ENCODE measurements at regions of chr20 and their contacts with region 1.

Region 1: GRCh38 chr20:39429716-39430115 is 467.6 kb downstream of the DHX35 start:
- DNase-seq: no peak
- H3K4me3 ChIP-seq: no peak overlapping the region
- H3K27ac ChIP-seq: no peak overlapping the region
- H3K4me1 ChIP-seq: no peaks in the 10 kb centered on the region
- H3K27me3 ChIP-seq: no peaks in the 10 kb centered on the region

Region 2: GRCh38 chr20:38892091-38892981 is 537.4 kb before region 1 on chr20:
- in situ Hi-C with region 1: no loop called
- DNase-seq: no peak
- H3K4me3 ChIP-seq: no peak overlapping the region
- H3K27ac ChIP-seq: no peak overlapping the region
- H3K4me1 ChIP-seq: no peaks in the 10 kb centered on the region
- H3K27me3 ChIP-seq: peaks cover 18% of the 10 kb centered on the region

Region 3: DNA sequence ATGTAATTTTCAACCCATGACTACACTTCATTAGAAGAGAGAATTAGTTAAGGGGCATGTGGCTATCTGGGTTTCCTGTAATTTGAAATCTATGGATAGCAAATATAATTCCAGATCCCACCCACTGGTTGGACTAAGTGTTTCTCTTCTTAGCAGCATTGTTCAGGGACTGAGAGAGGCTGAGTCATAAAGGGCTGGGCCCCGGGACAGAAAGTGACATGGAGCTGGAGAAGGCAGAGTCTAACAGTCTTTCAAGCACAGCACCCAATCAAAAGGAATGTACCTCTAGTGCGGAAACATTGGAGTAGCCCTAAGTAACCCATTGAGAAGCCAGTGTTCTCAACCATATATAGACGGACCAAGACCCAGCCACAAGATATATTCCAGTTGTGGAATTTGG is 103.7 kb before region 1 on chr20:
- in situ Hi-C with region 1: no loop called
- DNase-seq: no peak
- H3K4me3 ChIP-seq: no peak overlapping the region
- H3K27ac ChIP-seq: no peak overlapping the region
- H3K4me1 ChIP-seq: no peaks in the 10 kb centered on the region
- H3K27me3 ChIP-seq: no peaks in the 10 kb centered on the region

Region 4: DNA sequence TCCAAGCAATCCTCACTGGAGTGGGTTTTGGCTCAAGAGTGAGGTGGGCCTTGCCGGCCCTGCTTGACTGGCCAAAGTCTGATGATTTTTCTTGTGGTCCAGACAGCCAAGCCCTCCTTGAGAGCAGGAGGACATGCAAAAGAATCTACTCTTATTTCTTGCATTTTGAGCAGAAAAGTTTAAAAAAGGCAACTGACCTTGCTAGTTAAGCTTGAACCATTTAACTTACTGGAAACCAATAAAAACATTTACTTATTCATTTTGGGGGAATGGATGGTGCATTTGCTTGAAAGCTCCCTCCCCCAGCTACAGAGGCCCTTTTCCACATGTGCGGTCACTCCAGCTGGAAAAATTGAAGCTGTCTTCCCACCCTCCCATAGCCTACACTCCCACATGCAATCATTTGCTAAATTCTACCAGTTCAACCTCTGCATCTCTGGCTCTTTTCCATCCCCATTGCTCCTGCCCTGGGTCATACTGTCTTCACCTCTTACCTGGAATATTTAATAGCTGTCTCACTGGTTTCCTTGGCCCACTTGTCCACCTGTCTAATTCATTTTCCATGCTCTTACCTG is 60.4 kb after region 1 on chr20:
- in situ Hi-C with region 1: loop called (anchors 10 kb)
- DNase-seq: no peak
- H3K4me3 ChIP-seq: no peak overlapping the region
- H3K27ac ChIP-seq: no peak overlapping the region
- H3K4me1 ChIP-seq: no peaks in the 10 kb centered on the region
- H3K27me3 ChIP-seq: no peaks in the 10 kb centered on the region